ENCODE measurements at regions of chr20 and their contacts with region 1.

Region 1: GRCh38 chr20:44057698-44058675 is 129.0 kb downstream of the JPH2 start:
- DNase-seq: no peak
- H3K4me3 Mint-ChIP-seq: no peak overlapping the region
- H3K27ac Mint-ChIP-seq: no peak overlapping the region
- H3K4me1 Mint-ChIP-seq: peaks cover 6% of the 10 kb centered on the region
- H3K27me3 Mint-ChIP-seq: peaks cover 15% of the 10 kb centered on the region

Region 2: GRCh38 chr20:44038681-44039123 is 19.3 kb before region 1 on chr20:
- CTCF ChIA-PET with region 1: no interaction called
- POLR2A ChIA-PET with region 1: no interaction called
- DNase-seq: no peak
- H3K4me3 Mint-ChIP-seq: no peak overlapping the region
- H3K27ac Mint-ChIP-seq: no peak overlapping the region
- H3K4me1 Mint-ChIP-seq: peaks cover 15% of the 10 kb centered on the region
- H3K27me3 Mint-ChIP-seq: peaks cover 44% of the 10 kb centered on the region

Region 3: DNA sequence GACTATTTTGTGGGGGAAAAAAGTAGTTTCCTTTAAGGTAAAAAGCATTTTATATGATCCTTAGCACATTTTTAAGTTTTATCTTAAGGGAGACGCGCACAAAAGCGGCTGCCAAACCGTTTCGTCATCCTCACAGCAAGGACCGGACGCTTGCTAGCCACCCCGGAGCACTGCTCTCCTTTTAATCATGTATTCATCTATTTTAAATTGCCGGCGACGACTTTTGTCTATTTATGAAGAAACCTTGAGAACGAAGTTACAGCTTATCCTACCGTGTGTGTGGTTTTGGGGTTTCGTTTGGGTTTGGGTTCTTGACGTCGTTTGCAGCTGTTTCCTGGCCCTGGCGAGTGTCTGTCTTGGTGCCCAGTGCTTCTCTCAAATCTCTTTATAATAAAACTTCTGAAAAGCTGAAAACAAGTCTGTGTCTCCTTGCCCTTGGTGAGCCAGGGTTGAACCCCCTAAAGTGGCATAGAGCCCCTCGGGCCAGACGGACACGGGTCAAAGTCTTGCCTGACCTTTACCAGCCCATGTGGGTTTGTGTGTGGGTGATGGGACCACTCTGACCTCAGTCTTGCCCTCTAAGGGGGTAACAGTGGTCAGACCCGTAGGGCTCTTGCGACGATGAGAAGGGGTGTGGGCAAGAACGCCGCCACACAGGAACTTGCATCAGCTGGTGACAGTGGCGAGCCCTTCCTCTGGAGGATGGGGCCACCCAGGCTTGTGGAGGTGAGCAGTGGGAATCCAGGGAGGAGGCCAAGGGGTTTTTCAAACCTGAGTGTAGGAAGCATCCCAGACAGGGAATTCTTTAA is 11.4 kb after region 1 on chr20:
- CTCF ChIA-PET with region 1: interaction called, 10 read pairs
- POLR2A ChIA-PET with region 1: no interaction called
- DNase-seq: peak; percentile 80
- H3K4me3 Mint-ChIP-seq: peak overlapping the region; percentile 69
- H3K27ac Mint-ChIP-seq: peak overlapping the region; percentile 97
- H3K4me1 Mint-ChIP-seq: peaks cover 63% of the 10 kb centered on the region
- H3K27me3 Mint-ChIP-seq: peaks cover 13% of the 10 kb centered on the region

Measured in activated CD4-positive, alpha-beta T cell treated with anti-CD3 and anti-CD28 coated beads, Interleukin-2, amount 10 ng/mL, durations not matched to agents 7 days and 5 days (primary cell).